ENCODE measurements at regions of chr22 and their contacts with region 1.

Region 1: DNA sequence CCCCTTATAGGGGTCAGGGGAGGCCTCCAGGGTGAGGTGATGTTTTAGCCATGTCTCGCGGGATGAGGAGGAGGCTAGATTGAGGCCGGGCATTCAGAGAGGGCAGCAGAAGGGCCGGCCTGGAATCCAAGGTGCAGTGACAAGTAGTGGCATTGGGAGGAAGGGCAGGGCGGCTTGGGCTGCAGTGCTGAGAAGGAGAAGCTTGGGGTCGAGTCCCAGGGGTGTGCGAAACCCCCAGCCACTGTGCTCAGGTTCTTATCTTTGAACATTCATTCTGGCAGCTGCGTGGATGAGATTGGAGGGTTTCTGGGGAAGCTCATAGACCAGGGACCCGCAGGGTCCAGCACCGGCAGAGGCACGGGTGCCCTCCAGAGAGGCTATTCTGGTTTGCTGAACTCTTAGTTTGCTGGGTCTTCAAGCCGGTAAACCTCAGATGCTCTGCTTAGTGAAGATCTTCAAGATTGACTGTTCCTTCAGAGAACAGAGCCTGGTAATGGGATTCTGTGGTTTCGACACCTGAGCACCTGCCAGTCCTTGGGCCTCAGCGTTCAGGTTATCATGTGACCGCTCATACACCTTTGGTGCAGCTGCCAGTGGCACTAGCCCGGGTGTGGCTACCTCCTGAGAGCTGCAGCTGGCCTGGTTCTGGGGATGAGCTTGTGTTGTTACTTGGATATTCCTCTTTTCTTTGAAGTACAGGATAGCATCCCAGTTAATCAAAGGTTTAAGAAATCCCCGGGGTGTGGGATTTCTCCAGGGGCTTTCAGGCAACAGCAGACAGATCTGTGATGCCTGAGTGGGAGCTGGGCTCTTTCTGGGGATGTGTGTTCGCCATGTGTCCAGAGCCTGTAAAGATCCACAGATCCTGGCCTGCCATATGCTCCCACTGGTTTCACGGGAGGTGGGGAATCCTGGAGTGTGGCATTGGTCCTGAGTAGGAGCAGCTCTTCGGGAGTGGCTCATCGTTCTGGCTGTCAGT is 152.8 kb downstream of the TBC1D22A start:
- DNase-seq: no peak
- ATAC-seq: no peak

Region 2: GRCh38 chr22:46959369-46959768 is 44.2 kb after region 1 on chr22:
- intact Hi-C with region 1: no loop called
- DNase-seq: no peak
- ATAC-seq: no peak

Region 3: GRCh38 chr22:46971141-46972091 is 56.2 kb after region 1 on chr22:
- intact Hi-C with region 1: loop called in 1 of 2 experiments (anchors 10 kb)
- DNase-seq: peak; percentile 79
- ATAC-seq: peak; percentile 75 to 82